Activated naive CD4-positive, alpha-beta T cell treated with anti-CD3 and anti-CD28 coated beads for 36 hours (primary cell): ENCODE measurements at regions of chr13 and their contacts with region 1.

Region 1: DNA sequence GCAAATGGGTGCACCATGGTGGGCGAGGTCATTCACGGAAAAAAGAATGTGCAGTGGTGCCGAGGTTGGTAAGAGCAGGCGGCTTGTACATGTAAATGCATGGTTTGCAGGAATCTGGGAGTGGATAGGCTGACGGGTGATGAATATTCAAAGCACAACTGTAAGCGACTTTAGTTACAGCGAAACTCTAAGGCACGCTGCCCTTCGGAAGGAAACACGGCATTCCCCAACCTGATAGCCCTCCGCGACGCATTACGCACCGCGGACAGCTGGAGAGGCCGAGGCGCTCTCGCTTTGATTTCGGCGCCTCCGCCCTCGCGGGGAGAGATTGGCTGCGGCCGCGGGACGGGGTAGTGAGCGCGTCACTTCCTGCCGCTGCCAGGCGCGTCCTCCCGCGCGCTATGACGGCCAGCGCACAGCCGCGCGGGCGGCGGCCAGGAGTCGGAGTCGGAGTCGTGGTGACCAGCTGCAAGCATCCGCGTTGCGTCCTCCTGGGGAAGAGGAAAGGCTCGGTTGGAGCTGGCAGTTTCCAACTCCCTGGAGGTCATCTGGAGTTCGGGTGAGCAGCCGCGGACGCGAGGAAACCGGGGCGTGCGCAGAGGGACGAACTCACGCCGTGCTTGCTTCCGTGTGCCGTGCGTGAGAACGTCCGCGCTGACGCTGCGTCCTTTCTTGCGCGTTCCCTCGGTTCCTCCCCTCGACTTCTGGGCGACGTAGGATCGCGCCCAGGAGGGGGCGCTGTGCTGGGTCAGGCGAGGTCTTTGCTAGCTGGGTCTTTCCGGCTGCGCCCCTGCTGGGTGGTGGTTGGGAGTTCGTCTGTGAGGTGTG is at the start of gene NUDT15:
- DNase-seq: peak; percentile 96
- H3K4me3 Mint-ChIP-seq: peak within 1 kb of the TSS; percentile 95
- H3K27ac Mint-ChIP-seq: peak within 1 kb of the TSS; percentile 95
- H3K4me1 Mint-ChIP-seq: peaks cover 42% of the 10 kb centered on the region
- H3K27me3 Mint-ChIP-seq: no peaks in the 10 kb centered on the region
- total RNA-seq, gene NUDT15: 28.3 to 29.2 TPM

Region 2: DNA sequence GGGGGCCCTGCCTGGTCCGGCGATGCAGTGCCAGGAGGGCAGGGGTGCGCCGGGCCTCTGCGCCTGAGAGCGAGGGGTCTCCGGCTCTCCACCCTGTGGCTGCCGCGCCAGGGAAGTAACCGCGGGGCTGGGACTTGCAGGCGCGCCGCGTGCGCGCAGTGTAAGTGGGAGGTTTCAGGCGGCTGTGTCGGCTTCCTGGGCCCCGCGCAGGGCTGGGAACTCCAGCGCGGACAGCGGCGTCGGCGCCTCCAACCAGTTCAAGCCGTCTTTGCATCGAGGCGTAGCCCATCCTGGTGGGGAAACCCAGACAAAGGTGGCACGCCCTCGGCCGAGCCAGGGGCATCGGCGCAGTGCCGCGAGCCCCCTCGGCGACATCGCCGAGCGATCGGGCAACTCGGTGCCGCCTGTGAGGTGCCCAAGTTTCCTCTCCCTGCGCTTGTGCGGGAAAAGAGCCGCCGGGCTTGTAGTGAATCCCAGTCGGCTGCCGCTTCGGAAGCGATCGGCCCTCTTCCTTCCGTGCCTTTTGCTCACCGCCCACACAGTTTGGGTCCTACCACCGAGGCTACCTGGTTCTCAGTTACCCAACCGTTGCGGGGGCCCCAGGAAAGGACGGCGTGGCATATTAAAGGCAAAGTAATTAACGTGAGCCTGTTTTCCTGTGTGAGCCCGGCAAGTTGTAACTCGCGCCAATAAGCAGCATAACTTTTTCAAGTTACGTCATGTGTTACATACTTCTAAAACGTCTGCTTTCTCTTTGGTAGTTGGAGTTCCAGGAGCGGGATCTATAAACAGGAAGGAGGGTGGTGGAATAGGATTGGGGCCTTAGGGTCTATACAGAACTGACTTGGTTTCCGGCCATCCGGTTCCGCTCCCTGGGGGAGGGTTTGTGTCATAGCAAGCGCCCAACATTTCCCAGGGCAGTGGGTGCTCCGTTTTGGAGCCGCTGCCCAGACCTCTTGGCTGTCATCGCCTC is 1483.4 kb before region 1 on chr13:
- CTCF ChIA-PET with region 1: no interaction called
- intact Hi-C with region 1: loop called (anchors 2 kb)
- DNase-seq: peak; percentile 79
- H3K4me3 Mint-ChIP-seq: peak overlapping the region; percentile 91
- H3K27ac Mint-ChIP-seq: peak overlapping the region; percentile 86
- H3K4me1 Mint-ChIP-seq: peaks cover 40% of the 10 kb centered on the region
- H3K27me3 Mint-ChIP-seq: no peaks in the 10 kb centered on the region

Region 3: GRCh38 chr13:48000778-48001628 is 36.6 kb before region 1 on chr13 and contains the start of gene SUCLA2:
- CTCF ChIA-PET with region 1: interaction called, 4 read pairs
- intact Hi-C with region 1: loop called (anchors 1 kb)
- DNase-seq: peak; percentile 92
- H3K4me3 Mint-ChIP-seq: peak within 1 kb of the TSS; percentile 94
- H3K27ac Mint-ChIP-seq: peak within 1 kb of the TSS; percentile 81
- H3K4me1 Mint-ChIP-seq: peaks cover 31% of the 10 kb centered on the region
- H3K27me3 Mint-ChIP-seq: no peaks in the 10 kb centered on the region
- total RNA-seq, gene SUCLA2: 44.0 to 44.4 TPM

Region 4: DNA sequence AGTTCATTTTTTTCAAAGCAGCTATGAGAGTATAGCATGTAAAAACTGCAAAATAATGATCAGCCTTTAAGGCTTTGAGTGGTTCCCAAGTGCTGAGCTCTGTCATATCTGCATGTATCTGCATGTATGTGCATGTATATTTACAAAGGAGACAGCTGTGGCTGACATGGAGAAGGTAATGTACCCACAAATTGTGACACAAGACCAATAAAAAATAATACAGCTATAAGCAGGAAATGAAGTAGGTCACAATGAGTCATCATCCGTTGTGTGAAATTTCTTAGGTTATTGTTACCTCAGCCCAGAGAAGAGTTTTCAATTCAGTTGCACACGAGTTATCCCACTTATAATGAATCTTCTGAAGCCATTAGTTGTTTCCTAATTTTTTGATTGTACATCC is 118.3 kb after region 1 on chr13:
- CTCF ChIA-PET with region 1: no interaction called
- intact Hi-C with region 1: loop called (anchors 1 kb)
- DNase-seq: peak; percentile 44
- H3K4me3 Mint-ChIP-seq: peak overlapping the region; percentile 74
- H3K27ac Mint-ChIP-seq: peak overlapping the region; percentile 99
- H3K4me1 Mint-ChIP-seq: peaks cover 85% of the 10 kb centered on the region
- H3K27me3 Mint-ChIP-seq: no peaks in the 10 kb centered on the region

Region 5: GRCh38 chr13:48492470-48493065 is 455.0 kb after region 1 on chr13:
- CTCF ChIA-PET with region 1: no interaction called
- intact Hi-C with region 1: loop called (anchors 2 kb)
- DNase-seq: peak; percentile 74
- H3K4me3 Mint-ChIP-seq: no peak overlapping the region
- H3K27ac Mint-ChIP-seq: no peak overlapping the region
- H3K4me1 Mint-ChIP-seq: peaks cover 39% of the 10 kb centered on the region
- H3K27me3 Mint-ChIP-seq: no peaks in the 10 kb centered on the region

Region 6: DNA sequence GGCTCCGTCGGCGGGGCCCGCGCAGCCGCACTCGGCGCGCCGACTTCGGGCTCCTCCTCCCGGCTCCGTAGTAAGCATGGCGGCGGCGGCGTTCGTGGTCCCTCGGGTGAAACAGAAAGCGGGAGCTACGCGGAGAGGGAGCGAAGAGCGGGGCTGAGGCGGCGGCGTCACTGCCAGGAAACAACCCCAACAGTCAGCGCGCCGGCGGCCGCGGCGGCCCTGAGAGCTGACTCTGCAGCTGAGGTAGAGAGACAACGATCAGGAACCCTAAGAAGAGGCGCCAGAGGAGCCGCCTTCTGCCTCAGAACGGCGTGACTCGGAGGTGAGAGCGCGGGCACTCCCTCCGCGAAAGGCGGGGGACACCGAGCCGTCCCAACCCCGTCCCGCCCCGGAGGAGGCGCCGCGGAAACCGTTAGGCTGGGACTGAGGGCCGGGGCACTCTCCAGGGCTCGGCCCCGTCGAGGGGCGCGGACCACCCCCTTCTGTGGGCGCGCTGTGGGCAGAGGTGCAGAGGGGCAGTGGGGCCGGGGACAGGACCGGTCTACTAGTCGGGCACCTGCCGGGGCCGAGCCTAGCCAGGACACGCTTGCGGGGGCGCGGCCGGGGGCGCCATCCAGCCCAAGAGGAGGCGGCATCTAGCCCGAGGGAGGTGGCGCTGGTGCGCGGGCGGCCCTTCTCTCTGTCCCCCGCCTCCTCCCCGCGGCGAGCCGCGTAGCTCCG is 938.5 kb after region 1 on chr13 and contains the start of gene FNDC3A:
- CTCF ChIA-PET with region 1: no interaction called
- intact Hi-C with region 1: loop called (anchors 5 kb)
- DNase-seq: peak; percentile 89
- H3K4me3 Mint-ChIP-seq: peak within 1 kb of the TSS; percentile 96
- H3K27ac Mint-ChIP-seq: peak within 1 kb of the TSS; percentile 98
- H3K4me1 Mint-ChIP-seq: peaks cover 31% of the 10 kb centered on the region
- H3K27me3 Mint-ChIP-seq: peaks cover 4% of the 10 kb centered on the region
- total RNA-seq, gene FNDC3A: 17.1 to 18.3 TPM